ENCODE measurements at regions of chr15 and their contacts with region 1.

Region 1: GRCh38 chr15:63487076-63487757 is 17.2 kb upstream of the USP3 start:
- DNase-seq: peak; percentile 90 to 96
- ATAC-seq: peak; percentile 90 to 91
- H3K4me3 ChIP-seq: no peak overlapping the region
- H3K27ac ChIP-seq: peak overlapping the region; percentile 60 to 74
- H3K4me1 ChIP-seq: peaks cover 59% of the 10 kb centered on the region
- CTCF ChIP-seq: peak; percentile 95
- EP300 ChIP-seq: no peak
- POLR2A ChIP-seq: no peak
- RAD21 ChIP-seq: peak; percentile 91 to 92

Region 2: GRCh38 chr15:62569460-62570412 is 917.5 kb before region 1 on chr15:
- CTCF ChIA-PET with region 1: no interaction called
- POLR2A ChIA-PET with region 1: no interaction called
- DNase-seq: peak; percentile 79 to 85
- ATAC-seq: peak; percentile 57 to 74
- H3K4me3 ChIP-seq: no peak overlapping the region; the same call in 2 of the 3 replicates
- H3K27ac ChIP-seq: no peak overlapping the region
- H3K4me1 ChIP-seq: peaks cover 18% of the 10 kb centered on the region
- CTCF ChIP-seq: no peak
- EP300 ChIP-seq: no peak; a peak in 1 of 5 replicates
- POLR2A ChIP-seq: no peak
- RAD21 ChIP-seq: peak in 1 of 2 experiments; percentile 21; a peak in 3 of 5 replicates

Region 3: DNA sequence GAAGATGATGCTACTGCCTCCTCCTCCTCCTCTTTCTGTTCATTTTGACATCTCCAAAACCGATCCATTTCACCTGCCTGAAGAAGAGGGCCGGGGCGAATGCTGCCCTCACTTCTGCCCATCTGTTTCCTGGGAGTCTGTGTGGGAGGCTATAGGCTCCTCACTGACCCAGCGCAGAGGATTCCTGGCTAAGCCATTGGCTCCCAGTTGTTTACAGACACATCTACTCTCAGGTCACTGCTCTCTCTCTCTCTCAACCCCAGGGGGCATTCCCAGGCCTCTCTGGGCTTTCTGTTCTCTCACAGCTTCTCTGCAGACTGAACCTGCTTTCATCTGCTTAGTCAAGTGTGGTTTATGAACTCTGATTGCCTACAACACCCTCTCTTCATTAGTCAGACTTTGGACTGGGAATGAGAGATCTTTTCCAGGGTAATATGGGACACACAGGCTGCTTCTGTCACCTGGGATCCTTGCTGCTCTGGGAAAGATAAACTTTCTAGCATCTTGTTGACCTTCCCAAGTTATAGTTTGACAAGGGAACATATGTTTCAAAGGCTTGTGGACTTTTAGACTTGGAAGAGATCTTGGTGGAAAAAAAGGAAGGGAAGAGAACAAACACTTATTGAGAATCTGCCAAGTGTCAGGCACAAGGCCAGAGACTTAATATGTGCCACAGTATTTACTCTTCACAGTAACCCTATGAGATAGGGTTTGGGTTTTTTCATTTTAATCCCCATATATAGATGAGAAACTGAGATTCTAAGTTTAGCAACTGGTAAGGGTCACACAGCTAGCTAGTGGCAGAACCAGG is 13.0 kb before region 1 on chr15:
- CTCF ChIA-PET with region 1: interaction called, 53 read pairs
- POLR2A ChIA-PET with region 1: no interaction called
- DNase-seq: peak in 1 of 2 experiments; percentile 95
- ATAC-seq: peak; percentile 82
- H3K4me3 ChIP-seq: no peak overlapping the region
- H3K27ac ChIP-seq: peak overlapping the region; percentile 81 to 90
- H3K4me1 ChIP-seq: peaks cover 59% of the 10 kb centered on the region
- CTCF ChIP-seq: no peak
- EP300 ChIP-seq: peak; percentile 24 to 45; a peak in 3 of 5 replicates
- POLR2A ChIP-seq: no peak
- RAD21 ChIP-seq: peak; percentile 25 to 43; a peak in 2 of 5 replicates

Region 4: DNA sequence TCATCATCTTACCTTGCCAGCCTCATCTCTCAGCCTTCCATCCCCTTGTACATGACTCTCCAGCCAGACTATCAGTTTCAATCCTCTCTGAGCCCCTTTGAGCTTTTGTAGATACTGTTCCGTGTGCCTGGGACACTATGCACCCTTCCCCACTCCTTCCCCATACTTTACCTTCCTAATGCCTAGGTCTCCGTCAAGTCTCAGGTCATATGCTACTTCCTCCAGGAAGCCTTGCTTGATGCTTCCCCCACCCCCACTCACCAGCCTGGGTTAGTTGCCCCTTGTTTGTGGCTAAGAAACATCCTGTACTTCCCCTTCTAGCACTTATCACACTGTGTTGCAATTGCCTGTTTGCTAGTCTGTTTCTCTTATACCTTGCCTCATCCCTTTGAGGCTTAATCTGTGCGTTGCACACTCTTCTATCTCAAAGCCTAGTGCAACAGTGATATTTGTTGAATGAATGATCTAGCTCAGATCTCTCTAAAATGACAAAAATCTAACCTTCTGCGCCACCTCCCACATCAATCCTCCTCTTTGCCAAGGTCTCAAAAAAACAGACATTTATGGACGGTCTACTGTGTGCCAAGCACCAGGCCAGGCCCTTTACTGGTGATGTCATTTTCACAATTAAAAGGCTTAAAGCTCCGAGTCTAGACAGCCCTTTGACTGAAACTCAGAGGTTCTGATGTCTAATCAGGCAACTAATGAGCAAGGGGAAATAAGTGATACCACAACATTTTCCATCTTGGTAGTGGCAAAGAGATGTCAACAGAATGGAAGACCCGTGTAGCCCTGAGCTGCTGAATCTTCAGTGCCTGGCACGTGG is 10.6 kb after region 1 on chr15:
- CTCF ChIA-PET with region 1: interaction called, 161 read pairs
- POLR2A ChIA-PET with region 1: interaction called, 49 read pairs
- DNase-seq: peak in 1 of 2 experiments; percentile 37
- ATAC-seq: no peak
- H3K4me3 ChIP-seq: no peak overlapping the region
- H3K27ac ChIP-seq: peak overlapping the region; percentile 77 to 82
- H3K4me1 ChIP-seq: peaks cover 89% of the 10 kb centered on the region
- CTCF ChIP-seq: no peak
- EP300 ChIP-seq: no peak
- POLR2A ChIP-seq: no peak
- RAD21 ChIP-seq: no peak

Region 5: DNA sequence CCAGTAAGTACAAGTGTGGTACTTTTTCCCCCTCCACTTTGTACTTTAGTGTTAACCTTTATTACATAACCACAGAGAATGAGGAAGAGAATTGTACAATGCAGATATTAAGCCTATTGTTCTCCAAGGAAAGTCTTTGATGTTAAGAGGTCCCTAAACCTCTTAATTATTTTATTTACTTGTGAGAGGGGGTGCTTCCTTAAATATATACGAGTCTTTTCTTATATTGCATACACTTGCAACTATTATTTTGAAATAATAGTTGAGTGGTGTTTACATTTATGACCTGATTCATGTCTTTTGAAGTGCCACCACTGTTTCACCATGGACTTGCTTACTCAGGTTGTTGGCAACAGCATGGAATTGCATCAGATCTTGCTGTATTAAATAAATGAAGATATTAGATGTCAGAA is 27.3 kb after region 1 on chr15:
- CTCF ChIA-PET with region 1: interaction called, 22 read pairs
- POLR2A ChIA-PET with region 1: no interaction called
- DNase-seq: peak; percentile 57 to 86
- ATAC-seq: peak; percentile 60 to 87
- H3K4me3 ChIP-seq: peak overlapping the region; percentile 30
- H3K27ac ChIP-seq: peak overlapping the region; percentile 77 to 78
- H3K4me1 ChIP-seq: peaks cover 94% of the 10 kb centered on the region
- CTCF ChIP-seq: no peak
- EP300 ChIP-seq: peak; percentile 86 to 89; a peak in 3 of 5 replicates
- POLR2A ChIP-seq: no peak
- RAD21 ChIP-seq: 0 out of 5 replicates have a peak, but pooled peaks of 1 of the 2 experiments have one; percentile 22

Region 6: DNA sequence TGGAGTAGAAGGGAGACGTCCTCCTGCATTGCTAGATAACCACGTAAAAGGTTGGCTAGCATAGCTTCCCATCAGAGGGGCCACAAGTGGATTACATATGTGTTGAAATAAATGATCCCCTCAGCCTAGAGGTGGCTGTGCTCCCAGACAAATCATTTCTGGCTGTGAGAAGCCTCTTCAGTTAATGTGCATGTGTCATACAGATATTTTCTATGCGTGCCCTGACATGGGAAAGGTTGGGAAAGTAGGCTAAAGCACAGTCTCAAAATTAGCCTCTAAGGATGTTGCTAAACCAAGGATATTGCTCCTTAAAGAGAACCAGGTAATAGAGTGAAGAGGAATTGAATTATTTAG is 35.0 kb after region 1 on chr15:
- CTCF ChIA-PET with region 1: interaction called, 12 read pairs
- POLR2A ChIA-PET with region 1: no interaction called
- DNase-seq: no peak
- ATAC-seq: peak in 1 of 2 experiments; percentile 9; a peak in 1 of 6 replicates
- H3K4me3 ChIP-seq: no peak overlapping the region
- H3K27ac ChIP-seq: no peak overlapping the region
- H3K4me1 ChIP-seq: peaks cover 78% of the 10 kb centered on the region
- CTCF ChIP-seq: no peak
- EP300 ChIP-seq: no peak
- POLR2A ChIP-seq: no peak
- RAD21 ChIP-seq: no peak

Region 7: GRCh38 chr15:63539521-63539920 is 52.3 kb after region 1 on chr15:
- CTCF ChIA-PET with region 1: interaction called, 11 read pairs
- POLR2A ChIA-PET with region 1: no interaction called
- DNase-seq: no peak
- ATAC-seq: peak in 1 of 2 experiments; percentile 25; a peak in 1 of 6 replicates
- H3K4me3 ChIP-seq: no peak overlapping the region
- H3K27ac ChIP-seq: no peak overlapping the region
- H3K4me1 ChIP-seq: peaks cover 48% of the 10 kb centered on the region
- CTCF ChIP-seq: no peak
- EP300 ChIP-seq: no peak
- POLR2A ChIP-seq: no peak
- RAD21 ChIP-seq: no peak

Region 8: DNA sequence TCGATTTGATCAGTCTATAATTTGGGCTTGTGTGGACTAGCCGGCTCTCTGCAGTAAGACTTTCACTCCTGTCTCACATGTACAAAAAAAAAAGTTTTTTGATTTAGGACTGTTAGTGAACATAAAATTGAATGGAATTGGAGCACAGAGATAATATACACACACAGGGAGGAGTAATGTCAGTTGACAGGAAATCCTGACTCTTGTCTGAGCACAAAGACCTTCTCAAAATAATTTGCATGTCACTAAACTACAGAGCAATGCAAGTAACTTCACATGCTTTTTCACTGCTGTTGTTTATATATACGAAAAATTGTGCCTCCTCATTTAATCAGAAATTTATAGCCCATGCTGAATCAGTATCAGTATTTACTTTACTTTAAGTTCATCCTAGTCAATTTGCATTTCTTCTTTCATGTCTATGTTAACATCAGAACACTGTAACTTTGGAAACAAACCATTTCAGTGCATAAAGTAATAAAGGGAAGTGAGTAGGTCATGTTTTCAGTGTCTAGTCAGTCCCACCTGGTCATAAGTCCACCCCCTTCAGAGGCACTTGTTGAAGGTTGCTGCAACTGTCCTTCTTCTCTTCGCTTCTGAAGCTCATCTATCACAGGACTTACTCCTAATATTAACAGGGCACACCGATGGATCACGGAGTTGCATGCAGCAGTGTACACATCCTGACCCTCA is 225.8 kb after region 1 on chr15:
- CTCF ChIA-PET with region 1: no interaction called
- POLR2A ChIA-PET with region 1: no interaction called
- DNase-seq: no peak
- ATAC-seq: no peak
- H3K4me3 ChIP-seq: no peak overlapping the region
- H3K27ac ChIP-seq: no peak overlapping the region
- H3K4me1 ChIP-seq: peaks cover 13% of the 10 kb centered on the region
- CTCF ChIP-seq: no peak
- EP300 ChIP-seq: no peak
- POLR2A ChIP-seq: no peak
- RAD21 ChIP-seq: no peak